Activated CD4-positive, alpha-beta T cell treated with anti-CD3 and anti-CD28 coated beads, Interleukin-2, amount 10 ng/mL, durations not matched to agents 7 days and 5 days (primary cell): ENCODE measurements at regions of chr1 and their contacts with region 1.

Region 1: DNA sequence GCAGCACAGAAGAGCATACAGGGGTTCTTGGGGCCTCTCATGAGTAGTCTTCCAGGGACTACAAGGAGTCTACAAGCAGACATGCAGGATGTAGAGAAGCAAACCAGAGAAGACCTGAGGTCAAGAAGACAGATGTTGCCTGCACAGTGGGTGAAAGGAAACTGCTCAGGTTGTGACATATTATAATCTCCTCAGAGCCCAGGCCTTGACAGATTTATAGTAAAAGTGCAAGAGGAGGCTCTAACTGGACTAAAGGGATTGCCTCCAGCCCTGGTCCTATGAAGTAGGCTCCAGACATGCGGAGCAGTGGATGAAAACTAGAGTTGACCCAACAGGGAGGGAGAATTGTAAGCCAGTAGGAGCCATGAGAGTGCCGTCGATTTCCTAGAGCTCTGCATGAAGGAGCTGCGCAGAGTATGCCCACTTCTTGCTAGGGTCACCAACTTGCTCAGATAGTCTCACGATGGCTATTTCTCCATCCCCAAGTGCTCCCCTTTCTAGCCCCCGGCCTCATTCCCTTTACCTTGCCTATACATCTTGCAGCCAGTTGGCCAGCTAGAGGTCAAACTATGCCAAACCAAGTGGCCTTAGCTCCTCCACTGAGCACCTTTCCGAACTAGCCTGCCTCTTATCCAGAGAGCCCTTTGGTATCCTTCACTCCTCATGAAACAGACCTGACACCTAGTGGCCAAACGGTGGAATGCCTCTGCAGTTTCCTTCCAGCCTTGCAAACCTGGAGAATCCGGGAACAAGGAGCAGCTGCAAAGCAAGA is 36.2 kb upstream of the IPO9 start:
- DNase-seq: peak; percentile 62
- H3K4me3 Mint-ChIP-seq: no peak overlapping the region
- H3K27ac Mint-ChIP-seq: no peak overlapping the region
- H3K4me1 Mint-ChIP-seq: peaks cover 22% of the 10 kb centered on the region
- H3K27me3 Mint-ChIP-seq: peaks cover 2% of the 10 kb centered on the region

Region 2: GRCh38 chr1:201709564-201710295 is 83.0 kb before region 1 on chr1:
- CTCF ChIA-PET with region 1: interaction called, 11 read pairs
- POLR2A ChIA-PET with region 1: no interaction called
- DNase-seq: peak; percentile 64
- H3K4me3 Mint-ChIP-seq: no peak overlapping the region
- H3K27ac Mint-ChIP-seq: no peak overlapping the region
- H3K4me1 Mint-ChIP-seq: no peaks in the 10 kb centered on the region
- H3K27me3 Mint-ChIP-seq: peaks cover 1% of the 10 kb centered on the region

Region 3: GRCh38 chr1:201828820-201829774 is 36.4 kb after region 1 on chr1 and contains the start of gene IPO9:
- CTCF ChIA-PET with region 1: no interaction called
- POLR2A ChIA-PET with region 1: no interaction called
- DNase-seq: peak; percentile 95
- H3K4me3 Mint-ChIP-seq: peak within 1 kb of the TSS; percentile 94
- H3K27ac Mint-ChIP-seq: peak within 1 kb of the TSS; percentile 97
- H3K4me1 Mint-ChIP-seq: peaks cover 40% of the 10 kb centered on the region
- H3K27me3 Mint-ChIP-seq: no peaks in the 10 kb centered on the region
- total RNA-seq, gene IPO9: 47.9 to 52.4 TPM

Region 4: DNA sequence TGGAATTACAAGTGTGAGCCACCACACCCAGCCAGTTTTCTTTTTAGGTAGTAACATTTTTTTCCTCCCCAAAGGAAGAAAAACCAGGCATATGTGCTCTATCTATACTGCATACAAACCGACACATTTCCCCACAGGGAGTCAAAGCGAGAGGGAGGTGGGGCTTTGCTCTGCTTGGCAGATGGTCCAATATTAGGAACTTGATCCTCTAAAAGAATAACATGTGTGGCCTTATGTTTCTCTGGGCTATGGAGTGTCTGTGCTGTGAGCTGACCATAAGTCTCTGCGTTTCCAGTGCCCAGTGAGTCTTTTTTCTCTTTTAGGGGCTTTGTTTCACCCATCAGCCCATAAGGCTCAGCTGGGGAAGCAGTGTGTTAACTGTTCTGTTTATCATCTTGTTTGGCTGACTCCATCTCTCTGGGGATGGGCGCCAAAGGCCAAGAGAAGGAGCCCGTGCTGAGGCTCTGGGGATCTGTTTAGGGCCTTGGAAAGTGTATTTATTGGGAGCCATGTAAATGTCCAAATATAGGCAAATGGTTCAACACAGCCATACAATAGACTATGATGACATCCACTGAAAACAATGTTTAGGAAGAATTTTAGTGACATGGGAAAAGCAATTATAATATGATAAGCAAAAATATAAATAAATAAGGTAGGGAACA is 133.4 kb after region 1 on chr1:
- CTCF ChIA-PET with region 1: no interaction called
- POLR2A ChIA-PET with region 1: no interaction called
- DNase-seq: no peak
- H3K4me3 Mint-ChIP-seq: no peak overlapping the region
- H3K27ac Mint-ChIP-seq: no peak overlapping the region
- H3K4me1 Mint-ChIP-seq: no peaks in the 10 kb centered on the region
- H3K27me3 Mint-ChIP-seq: peaks cover 2% of the 10 kb centered on the region